A549 (cell line): ENCODE measurements at regions of chr4 and their contacts with region 1.

Region 1: GRCh38 chr4:158624889-158625478 is 46.7 kb downstream of the C4orf46 start:
- DNase-seq: peak; percentile 6 to 70
- ATAC-seq: peak; percentile 70 to 75; a peak in 4 of 6 replicates
- H3K4me3 ChIP-seq: no peak overlapping the region
- H3K27ac ChIP-seq: no peak overlapping the region
- H3K4me1 ChIP-seq: no peaks in the 10 kb centered on the region
- CTCF ChIP-seq: peak; percentile 76
- EP300 ChIP-seq: no peak
- POLR2A ChIP-seq: no peak
- RAD21 ChIP-seq: peak; percentile 84 to 86

Region 2: DNA sequence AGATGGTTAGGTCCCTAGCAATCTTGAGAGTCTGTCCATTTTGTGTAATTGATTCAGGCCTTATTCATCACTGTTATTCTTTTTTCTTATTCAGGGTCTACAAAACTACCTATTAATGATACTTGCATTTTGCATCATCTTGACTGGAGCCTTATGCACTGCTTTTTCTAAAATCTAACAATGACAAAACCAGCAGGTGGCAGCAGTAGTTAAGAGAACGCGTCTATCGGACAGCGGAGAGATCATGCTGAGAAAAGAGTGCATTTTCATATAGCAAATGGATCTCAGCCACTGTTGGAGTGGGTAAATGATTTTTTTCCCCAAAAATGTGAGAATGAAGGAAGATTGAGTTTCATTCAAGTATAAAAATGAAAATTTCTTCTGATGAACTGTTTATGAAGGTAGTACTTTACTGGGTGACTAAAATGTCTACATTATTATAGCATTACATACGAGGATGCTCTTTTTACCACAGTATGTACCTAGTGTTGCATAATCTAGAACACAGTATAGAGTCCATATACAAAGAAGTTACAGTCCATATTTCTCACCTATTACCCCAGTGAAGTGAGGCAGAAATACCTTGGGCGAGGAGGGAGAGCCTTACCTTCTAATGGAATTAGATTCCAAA is 371.5 kb before region 1 on chr4:
- CTCF ChIA-PET with region 1: interaction called, 46 read pairs
- POLR2A ChIA-PET with region 1: no interaction called
- DNase-seq: peak; percentile 13 to 39
- ATAC-seq: peak; percentile 90 to 91
- H3K4me3 ChIP-seq: no peak overlapping the region
- H3K27ac ChIP-seq: no peak overlapping the region
- H3K4me1 ChIP-seq: no peaks in the 10 kb centered on the region
- CTCF ChIP-seq: peak; percentile 49
- EP300 ChIP-seq: no peak
- POLR2A ChIP-seq: no peak
- RAD21 ChIP-seq: peak; percentile 66 to 74

Region 3: GRCh38 chr4:158259955-158260575 is 364.9 kb before region 1 on chr4:
- CTCF ChIA-PET with region 1: interaction called, 46 read pairs
- POLR2A ChIA-PET with region 1: no interaction called
- DNase-seq: peak in 1 of 2 experiments; percentile 20
- ATAC-seq: peak in 1 of 2 experiments; percentile 77; a peak in 3 of 6 replicates
- H3K4me3 ChIP-seq: no peak overlapping the region
- H3K27ac ChIP-seq: no peak overlapping the region
- H3K4me1 ChIP-seq: peaks cover 12% of the 10 kb centered on the region; the same call in 1 of the 3 replicates
- CTCF ChIP-seq: peak; percentile 71
- EP300 ChIP-seq: no peak
- POLR2A ChIP-seq: no peak
- RAD21 ChIP-seq: peak; percentile 74 to 86